Vagina (tissue), 2 donors: ENCODE measurements at regions of chr7 and their contacts with region 1.

Region 1: GRCh38 chr7:41548929-41549328 is 154.0 kb downstream of the INHBA start:
- DNase-seq: no peak
- H3K4me3 ChIP-seq: no peak overlapping the region
- H3K27ac ChIP-seq: no peak overlapping the region
- H3K4me1 ChIP-seq: no peaks in the 10 kb centered on the region
- H3K27me3 ChIP-seq: no peaks in the 10 kb centered on the region
- CTCF ChIP-seq: no peak
- POLR2A ChIP-seq: no peak

Region 2: DNA sequence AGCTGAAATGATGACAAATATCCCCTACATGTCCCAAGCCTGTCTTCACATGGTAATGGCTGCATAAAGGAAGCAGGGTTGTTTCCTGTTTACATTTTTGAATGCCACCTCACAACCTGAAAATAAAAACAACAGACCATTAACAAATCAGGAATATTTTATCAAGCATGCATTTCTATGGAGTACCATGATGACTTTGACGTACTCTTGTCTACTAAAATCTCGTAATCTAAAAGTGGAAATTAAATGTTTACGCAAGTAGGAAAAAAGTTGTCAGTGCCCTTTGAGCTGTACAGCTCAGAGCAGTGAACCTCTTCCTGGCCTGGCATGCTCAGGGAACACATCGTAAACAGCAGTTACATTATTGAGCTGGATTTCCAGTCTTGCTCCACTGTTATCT is 40.2 kb before region 1 on chr7:
- intact Hi-C with region 1: loop called (anchors 5 kb)
- DNase-seq: no peak
- H3K4me3 ChIP-seq: no peak overlapping the region
- H3K27ac ChIP-seq: no peak overlapping the region
- H3K4me1 ChIP-seq: no peaks in the 10 kb centered on the region
- H3K27me3 ChIP-seq: no peaks in the 10 kb centered on the region
- CTCF ChIP-seq: no peak
- POLR2A ChIP-seq: no peak